ENCODE measurements at regions of chr2 and their contacts with region 1.

Region 1: DNA sequence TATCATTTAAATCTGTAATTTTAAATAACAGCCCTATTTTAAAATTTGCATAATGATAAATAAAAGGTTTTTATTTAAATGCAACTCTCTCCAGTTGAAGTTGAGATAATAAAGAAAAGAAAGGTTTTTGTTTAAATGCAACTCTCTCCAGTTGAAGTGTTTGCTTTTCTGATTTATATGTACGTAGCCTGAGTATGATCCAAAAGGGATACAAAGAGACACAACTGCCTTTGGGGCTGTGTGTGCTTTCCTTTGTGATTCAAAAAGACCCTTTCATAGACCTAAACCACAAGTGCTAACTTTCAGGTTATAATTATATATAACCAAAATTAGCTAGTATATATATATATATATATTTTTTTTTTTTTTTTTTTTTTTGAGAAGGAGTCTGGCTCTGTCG is 76.2 kb upstream of the MFF start:
- ATAC-seq: no peak
- H3K4me3 ChIP-seq: no peak overlapping the region
- H3K27ac ChIP-seq: no peak overlapping the region
- H3K4me1 ChIP-seq: no peaks in the 10 kb centered on the region

Region 2: GRCh38 chr2:227132986-227133385 is 115.9 kb before region 1 on chr2:
- in situ Hi-C with region 1: loop called in 4 of 9 experiments (anchors 5 to 25 kb)
- ATAC-seq: no peak
- H3K4me3 ChIP-seq: no peak overlapping the region
- H3K27ac ChIP-seq: no peak overlapping the region
- H3K4me1 ChIP-seq: no peaks in the 10 kb centered on the region